ENCODE measurements at regions of chr15 and their contacts with region 1.

Region 1: DNA sequence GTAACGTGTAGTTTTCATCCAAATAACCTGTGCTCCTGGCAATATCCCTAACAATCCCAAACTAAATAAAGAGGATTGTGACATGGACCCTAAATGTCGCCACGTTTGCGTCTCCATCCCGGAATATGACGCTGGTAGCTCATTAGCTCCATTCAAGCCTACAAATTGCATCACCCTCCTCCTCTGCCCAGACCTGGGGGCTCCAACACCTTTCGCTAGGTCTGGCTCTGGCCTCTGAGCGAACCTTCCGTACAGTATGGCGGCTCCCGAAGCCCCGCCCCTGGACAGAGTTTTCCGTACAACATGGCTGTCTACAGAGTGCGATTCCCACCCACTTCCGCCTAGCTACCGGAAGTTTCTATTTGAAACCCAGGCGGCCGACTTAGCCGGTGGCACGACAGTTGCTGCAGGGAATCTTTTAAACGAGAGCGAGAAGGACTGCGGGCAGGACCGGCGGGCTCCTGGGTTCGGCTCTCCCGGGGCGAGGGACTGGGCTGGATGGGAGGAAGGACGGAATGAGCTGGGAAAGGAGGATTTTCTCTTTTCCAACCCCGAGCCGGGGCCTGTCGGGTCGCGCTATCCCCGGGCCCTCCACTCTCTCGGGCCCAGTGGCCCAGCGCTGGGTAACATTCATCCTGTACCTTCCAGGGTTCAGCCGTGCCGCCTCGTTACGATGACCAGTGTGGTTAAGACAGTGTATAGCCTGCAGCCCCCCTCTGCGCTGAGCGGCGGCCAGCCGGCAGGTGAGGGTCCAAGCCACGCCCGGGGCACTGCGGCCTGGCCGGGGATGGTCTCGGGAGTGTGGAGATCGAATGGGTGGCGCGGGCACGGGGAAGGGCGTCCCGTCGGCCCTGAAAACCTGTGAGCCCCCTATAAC is at the start of gene KNSTRN:
- DNase-seq: peak; percentile 83
- ATAC-seq: peak; percentile 99
- H3K4me3 Mint-ChIP-seq: peak within 1 kb of the TSS; percentile 96
- H3K27ac Mint-ChIP-seq: peak within 1 kb of the TSS; percentile 73
- H3K4me1 Mint-ChIP-seq: peaks cover 12% of the 10 kb centered on the region
- H3K27me3 Mint-ChIP-seq: no peaks in the 10 kb centered on the region
- CTCF ChIP-seq: no peak
- total RNA-seq, gene KNSTRN: 11.5 and 13.4 TPM in 2 replicates

Region 2: GRCh38 chr15:39132954-39133600 is 1249.7 kb before region 1 on chr15:
- CTCF ChIA-PET with region 1: no interaction called
- POLR2A ChIA-PET with region 1: no interaction called
- intact Hi-C with region 1: no loop called
- DNase-seq: no peak
- ATAC-seq: no peak
- H3K4me3 Mint-ChIP-seq: no peak overlapping the region
- H3K27ac Mint-ChIP-seq: no peak overlapping the region
- H3K4me1 Mint-ChIP-seq: no peaks in the 10 kb centered on the region
- H3K27me3 Mint-ChIP-seq: no peaks in the 10 kb centered on the region
- CTCF ChIP-seq: no peak

Region 3: GRCh38 chr15:40175160-40175559 is 207.7 kb before region 1 on chr15:
- CTCF ChIA-PET with region 1: no interaction called
- POLR2A ChIA-PET with region 1: no interaction called
- intact Hi-C with region 1: no loop called
- DNase-seq: no peak
- ATAC-seq: no peak
- H3K4me3 Mint-ChIP-seq: no peak overlapping the region
- H3K27ac Mint-ChIP-seq: no peak overlapping the region
- H3K4me1 Mint-ChIP-seq: no peaks in the 10 kb centered on the region
- H3K27me3 Mint-ChIP-seq: no peaks in the 10 kb centered on the region
- CTCF ChIP-seq: no peak

Region 4: GRCh38 chr15:40333922-40334492 is 48.8 kb before region 1 on chr15:
- CTCF ChIA-PET with region 1: no interaction called
- POLR2A ChIA-PET with region 1: no interaction called
- intact Hi-C with region 1: no loop called
- DNase-seq: no peak
- ATAC-seq: peak; percentile 48
- H3K4me3 Mint-ChIP-seq: peak overlapping the region; percentile 29
- H3K27ac Mint-ChIP-seq: no peak overlapping the region
- H3K4me1 Mint-ChIP-seq: peaks cover 29% of the 10 kb centered on the region
- H3K27me3 Mint-ChIP-seq: no peaks in the 10 kb centered on the region
- CTCF ChIP-seq: no peak

Region 5: DNA sequence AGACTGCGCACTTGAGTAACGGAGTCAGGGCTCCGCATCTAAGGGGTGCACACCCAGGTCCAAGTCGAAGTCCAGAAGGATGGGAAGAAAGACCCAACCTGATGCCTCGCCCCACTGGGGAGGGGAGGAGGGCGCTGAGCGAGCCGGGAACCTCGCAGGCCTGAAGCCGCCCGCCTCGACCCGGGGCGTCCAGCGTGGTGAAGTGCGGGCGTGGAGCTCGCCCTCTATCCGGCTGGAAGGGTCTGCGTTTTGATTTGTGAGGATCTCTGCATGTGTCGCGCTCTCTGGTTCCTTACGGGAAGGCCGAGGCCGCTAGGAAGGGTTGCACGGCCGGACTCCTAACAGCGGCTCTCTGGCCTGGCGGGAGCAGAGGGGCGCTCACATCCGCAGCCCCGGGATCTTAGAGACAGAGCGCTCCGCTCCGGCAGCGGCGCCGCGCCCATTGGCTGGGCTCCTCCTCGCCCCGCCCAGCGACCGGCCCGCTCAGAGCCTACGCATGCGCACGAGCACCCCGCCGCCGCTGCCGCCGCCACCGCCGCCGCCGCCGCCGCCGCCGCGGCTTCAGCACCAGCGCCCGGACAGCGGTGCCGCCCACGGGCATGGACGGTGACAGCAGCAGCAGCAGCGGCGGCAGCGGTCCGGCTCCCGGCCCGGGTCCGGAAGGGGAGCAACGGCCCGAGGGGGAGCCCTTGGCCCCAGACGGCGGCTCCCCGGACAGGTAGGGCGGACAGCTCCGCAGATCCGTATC is 24.9 kb before region 1 on chr15 and contains the start of gene DISP2:
- CTCF ChIA-PET with region 1: no interaction called
- POLR2A ChIA-PET with region 1: no interaction called
- intact Hi-C with region 1: loop called (anchors 1 kb)
- DNase-seq: peak; percentile 93
- ATAC-seq: peak; percentile 94
- H3K4me3 Mint-ChIP-seq: peak within 1 kb of the TSS; percentile 87
- H3K27ac Mint-ChIP-seq: no peak within 1 kb of the TSS
- H3K4me1 Mint-ChIP-seq: peaks cover 8% of the 10 kb centered on the region
- H3K27me3 Mint-ChIP-seq: no peaks in the 10 kb centered on the region
- CTCF ChIP-seq: no peak
- total RNA-seq, gene DISP2: 0.38 and 0.39 TPM in 2 replicates

Region 6: GRCh38 chr15:40398413-40398873 is 15.6 kb after region 1 on chr15:
- CTCF ChIA-PET with region 1: no interaction called
- POLR2A ChIA-PET with region 1: interaction called, 6 read pairs
- intact Hi-C with region 1: loop called (anchors 1 kb)
- DNase-seq: no peak
- ATAC-seq: peak; percentile 86
- H3K4me3 Mint-ChIP-seq: peak overlapping the region; percentile 42
- H3K27ac Mint-ChIP-seq: peak overlapping the region; percentile 38
- H3K4me1 Mint-ChIP-seq: peaks cover 18% of the 10 kb centered on the region
- H3K27me3 Mint-ChIP-seq: no peaks in the 10 kb centered on the region
- CTCF ChIP-seq: no peak

Region 7: DNA sequence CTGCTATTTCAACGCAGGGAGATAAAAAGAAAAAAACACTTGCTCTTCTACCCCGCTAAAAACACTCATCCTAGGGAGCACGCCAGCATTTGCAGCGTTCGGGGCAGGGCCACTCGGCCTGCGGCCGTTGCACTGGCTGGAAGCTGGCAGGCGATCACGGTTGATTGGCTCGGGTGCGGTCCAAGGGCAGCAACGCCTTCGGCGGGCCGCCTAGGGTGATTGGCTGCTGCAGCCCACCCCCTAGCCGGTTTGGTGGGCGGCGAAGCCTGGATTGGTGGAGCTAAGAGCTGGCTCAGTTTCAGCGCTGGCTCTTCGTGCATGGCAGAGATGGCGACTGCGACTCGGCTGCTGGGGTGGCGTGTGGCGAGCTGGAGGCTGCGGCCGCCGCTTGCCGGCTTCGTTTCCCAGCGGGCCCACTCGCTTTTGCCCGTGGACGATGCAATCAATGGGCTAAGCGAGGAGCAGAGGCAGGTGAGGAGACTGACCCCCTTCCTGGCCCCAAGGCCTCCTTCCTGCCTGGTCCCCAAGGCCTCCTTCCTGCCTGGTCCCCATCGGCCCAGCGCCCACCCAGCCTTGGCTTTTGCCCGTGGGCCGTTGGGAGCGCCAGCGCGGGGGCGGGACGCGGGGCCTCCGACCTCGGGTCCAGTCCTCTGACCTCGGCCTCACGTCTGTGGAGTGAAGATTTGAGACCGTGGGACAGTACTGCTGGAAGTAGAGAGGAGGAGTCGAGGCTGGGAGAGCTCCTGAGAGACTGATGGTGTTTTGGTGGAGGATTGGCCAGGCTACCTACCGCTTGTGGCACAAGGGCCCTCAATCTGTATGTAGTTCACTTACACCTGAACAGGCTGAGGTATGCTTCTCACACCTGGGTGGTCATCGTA is 22.9 kb after region 1 on chr15 and contains the start of gene IVD:
- CTCF ChIA-PET with region 1: no interaction called
- POLR2A ChIA-PET with region 1: interaction called, 11 read pairs
- intact Hi-C with region 1: loop called (anchors 1 kb)
- DNase-seq: peak; percentile 69
- ATAC-seq: peak; percentile 94
- H3K4me3 Mint-ChIP-seq: peak within 1 kb of the TSS; percentile 88
- H3K27ac Mint-ChIP-seq: peak within 1 kb of the TSS; percentile 67
- H3K4me1 Mint-ChIP-seq: peaks cover 34% of the 10 kb centered on the region
- H3K27me3 Mint-ChIP-seq: no peaks in the 10 kb centered on the region
- CTCF ChIP-seq: no peak
- total RNA-seq, gene IVD: 63.5 and 76.7 TPM in 2 replicates

Region 8: DNA sequence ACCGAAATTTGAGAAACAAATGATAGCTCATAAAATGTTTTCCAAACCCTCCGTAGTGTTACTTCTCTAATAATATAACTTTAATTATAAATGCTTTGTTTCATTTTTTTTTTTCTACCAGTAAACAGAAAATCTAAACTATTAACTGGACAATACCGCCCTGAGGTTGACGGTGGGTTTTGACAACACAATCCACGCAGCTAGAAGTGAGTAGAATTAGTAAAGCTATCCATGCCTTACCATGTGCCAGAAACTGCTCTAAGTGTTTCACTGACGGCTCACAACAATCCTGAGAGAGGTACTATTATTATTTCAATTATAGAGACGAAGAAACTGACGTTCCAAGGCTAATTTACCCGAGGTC is 1019.1 kb after region 1 on chr15:
- CTCF ChIA-PET with region 1: no interaction called
- POLR2A ChIA-PET with region 1: no interaction called
- intact Hi-C with region 1: loop called (anchors 2 kb)
- DNase-seq: no peak
- ATAC-seq: no peak
- H3K4me3 Mint-ChIP-seq: peak overlapping the region; percentile 93
- H3K27ac Mint-ChIP-seq: peak overlapping the region; percentile 94
- H3K4me1 Mint-ChIP-seq: peaks cover 16% of the 10 kb centered on the region
- H3K27me3 Mint-ChIP-seq: no peaks in the 10 kb centered on the region
- CTCF ChIP-seq: no peak

Measured in activated B cell treated with CpG ODN at 0.5 μM for 24 hours (primary cell).